Activated CD8-positive, alpha-beta T cell treated with anti-CD3 and anti-CD28 coated beads, Interleukin-2, amount 10 ng/mL, durations not matched to agents 7 days and 5 days (primary cell): ENCODE measurements at regions of chr4 and their contacts with region 1.

Region 1: DNA sequence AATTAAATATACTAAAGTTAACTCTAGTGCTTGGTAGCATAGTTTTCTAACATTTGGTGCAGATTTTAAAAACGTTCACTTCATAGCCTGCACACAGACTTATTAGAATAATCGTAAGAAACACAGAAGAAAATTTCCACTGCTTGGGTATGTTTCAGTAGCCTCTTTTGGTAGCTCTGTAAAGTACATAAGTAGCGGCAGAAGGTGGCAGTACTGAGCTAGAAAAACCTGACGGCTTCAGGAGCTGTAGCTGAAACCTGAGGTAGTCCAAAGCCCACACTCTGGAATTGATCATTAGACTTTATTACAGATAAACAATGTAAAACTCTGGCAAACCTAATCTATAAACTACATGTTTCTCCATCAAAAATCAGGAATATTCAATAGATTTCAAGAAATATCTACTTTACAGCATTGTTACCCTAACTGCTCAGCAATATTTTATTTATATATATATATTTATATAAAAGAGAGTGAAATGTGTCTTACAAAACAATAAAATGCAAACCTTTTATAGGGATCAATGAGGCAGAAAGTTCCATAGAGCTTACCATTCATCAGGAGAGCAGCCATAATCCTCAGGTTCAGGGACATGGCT is 88.2 kb downstream of the ATP8A1 start:
- DNase-seq: peak; percentile 80
- ATAC-seq: peak; percentile 85
- H3K4me3 Mint-ChIP-seq: no peak overlapping the region
- H3K27ac Mint-ChIP-seq: no peak overlapping the region
- H3K4me1 Mint-ChIP-seq: no peaks in the 10 kb centered on the region
- H3K27me3 Mint-ChIP-seq: no peaks in the 10 kb centered on the region

Region 2: DNA sequence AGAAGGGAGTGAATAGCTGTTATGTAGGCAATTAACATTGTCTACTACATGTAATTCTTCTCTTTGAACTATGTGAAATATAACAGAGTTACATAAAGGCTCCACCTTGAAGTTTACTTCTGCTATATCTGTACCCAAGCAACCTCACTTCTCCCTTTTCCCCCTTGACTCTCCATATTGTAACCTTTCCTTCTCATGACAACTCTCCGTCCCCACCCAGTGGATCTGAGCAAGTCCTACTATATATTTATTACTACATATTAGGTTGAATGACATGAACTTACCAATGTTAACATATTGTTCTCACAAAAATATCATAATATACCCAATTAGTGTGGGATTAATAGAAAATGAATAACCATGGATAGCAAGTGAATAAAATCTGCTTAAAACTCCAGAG is 181.4 kb after region 1 on chr4:
- CTCF ChIA-PET with region 1: interaction called, 49 read pairs
- POLR2A ChIA-PET with region 1: no interaction called
- DNase-seq: peak; percentile 47
- ATAC-seq: no peak
- H3K4me3 Mint-ChIP-seq: no peak overlapping the region
- H3K27ac Mint-ChIP-seq: no peak overlapping the region
- H3K4me1 Mint-ChIP-seq: no peaks in the 10 kb centered on the region
- H3K27me3 Mint-ChIP-seq: no peaks in the 10 kb centered on the region

Region 3: DNA sequence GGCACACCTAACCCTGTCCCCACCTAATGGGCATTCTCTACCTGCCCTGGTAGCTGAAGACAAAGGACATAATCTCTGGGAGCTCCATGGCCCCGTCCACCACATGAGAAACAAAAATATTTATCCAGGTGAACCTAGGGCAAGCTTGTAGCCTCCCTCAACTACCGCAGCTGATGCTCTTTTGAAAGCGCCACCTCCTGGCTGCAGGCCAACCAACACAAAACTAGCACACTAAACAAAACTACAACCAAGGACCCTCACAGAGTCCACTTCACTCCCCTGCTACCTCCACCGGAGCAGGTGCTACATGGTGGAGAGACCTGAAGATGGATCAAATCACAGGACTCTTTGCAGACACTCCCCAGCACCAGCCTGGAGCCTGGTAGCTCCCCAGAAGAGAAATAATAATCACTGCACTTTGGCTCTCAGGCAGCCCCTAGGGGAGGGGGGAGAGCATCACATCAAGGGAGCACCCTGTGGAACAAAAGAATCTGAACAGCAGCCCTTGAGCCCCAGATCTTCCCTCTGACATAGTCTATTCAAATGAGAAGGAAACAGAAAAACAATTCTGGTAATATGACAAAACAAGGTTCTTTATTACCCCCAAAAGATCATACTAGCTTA is 199.5 kb after region 1 on chr4:
- CTCF ChIA-PET with region 1: interaction called, 32 read pairs
- POLR2A ChIA-PET with region 1: no interaction called
- DNase-seq: peak; percentile 29
- ATAC-seq: no peak
- H3K4me3 Mint-ChIP-seq: no peak overlapping the region
- H3K27ac Mint-ChIP-seq: no peak overlapping the region
- H3K4me1 Mint-ChIP-seq: no peaks in the 10 kb centered on the region
- H3K27me3 Mint-ChIP-seq: peaks cover 11% of the 10 kb centered on the region

Region 4: DNA sequence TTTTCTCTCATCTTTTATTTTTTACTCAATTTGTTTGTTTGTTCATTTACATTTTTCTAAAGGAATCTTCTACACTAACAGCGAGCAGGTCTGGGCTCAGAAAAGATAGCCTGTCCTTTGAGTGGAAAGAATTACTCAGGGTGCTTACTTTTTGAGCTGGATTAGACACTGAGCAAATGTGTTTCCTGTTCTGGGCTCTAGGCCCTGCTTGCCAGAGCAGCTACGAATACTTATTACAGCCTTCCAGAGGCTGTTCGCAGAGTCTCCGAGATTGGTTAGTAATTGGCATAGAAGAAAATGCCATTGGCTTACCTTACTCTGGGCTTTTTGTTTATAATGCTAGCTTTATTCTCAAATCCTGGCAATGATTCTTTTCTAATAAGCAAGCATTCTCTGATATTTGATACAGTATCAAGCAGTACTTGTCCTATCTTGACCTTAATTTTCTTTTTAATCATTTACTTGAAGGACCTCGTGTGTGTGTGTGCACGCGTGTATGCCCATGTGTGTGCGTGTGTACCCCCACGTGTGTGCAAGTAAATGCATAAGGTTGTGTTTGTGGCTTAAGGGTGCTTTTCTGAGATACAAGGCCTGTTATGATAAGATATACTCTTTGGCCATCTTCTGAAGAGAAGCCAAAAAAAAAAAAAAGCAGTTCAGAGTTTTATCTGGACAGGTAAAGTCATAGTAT is 247.6 kb after region 1 on chr4:
- CTCF ChIA-PET with region 1: interaction called, 30 read pairs
- POLR2A ChIA-PET with region 1: no interaction called
- DNase-seq: no peak
- ATAC-seq: no peak
- H3K4me3 Mint-ChIP-seq: no peak overlapping the region
- H3K27ac Mint-ChIP-seq: no peak overlapping the region
- H3K4me1 Mint-ChIP-seq: no peaks in the 10 kb centered on the region
- H3K27me3 Mint-ChIP-seq: peaks cover 9% of the 10 kb centered on the region

Region 5: GRCh38 chr4:42865572-42866189 is 297.0 kb after region 1 on chr4:
- CTCF ChIA-PET with region 1: interaction called, 16 read pairs
- POLR2A ChIA-PET with region 1: no interaction called
- DNase-seq: peak; percentile 72
- ATAC-seq: peak; percentile 44
- H3K4me3 Mint-ChIP-seq: no peak overlapping the region
- H3K27ac Mint-ChIP-seq: no peak overlapping the region
- H3K4me1 Mint-ChIP-seq: no peaks in the 10 kb centered on the region
- H3K27me3 Mint-ChIP-seq: peaks cover 10% of the 10 kb centered on the region